ENCODE measurements at regions of chr6 and their contacts with region 1.

Region 1: GRCh38 chr6:52664186-52664990 is 6.5 kb upstream of the TMEM14A start:
- DNase-seq: peak; percentile 88 to 92
- H3K4me3 ChIP-seq: peak overlapping the region; percentile 63 to 71 (median 71)
- H3K27ac ChIP-seq: peak overlapping the region; percentile 29 to 66 (median 49)
- H3K4me1 ChIP-seq: peaks cover 0 to 12% of the 10 kb centered on the region in 2 donors
- H3K27me3 ChIP-seq: no peaks in the 10 kb centered on the region
- CTCF ChIP-seq: no peak
- POLR2A ChIP-seq: peak in 1 of 2 donors; percentile 95

Region 2: DNA sequence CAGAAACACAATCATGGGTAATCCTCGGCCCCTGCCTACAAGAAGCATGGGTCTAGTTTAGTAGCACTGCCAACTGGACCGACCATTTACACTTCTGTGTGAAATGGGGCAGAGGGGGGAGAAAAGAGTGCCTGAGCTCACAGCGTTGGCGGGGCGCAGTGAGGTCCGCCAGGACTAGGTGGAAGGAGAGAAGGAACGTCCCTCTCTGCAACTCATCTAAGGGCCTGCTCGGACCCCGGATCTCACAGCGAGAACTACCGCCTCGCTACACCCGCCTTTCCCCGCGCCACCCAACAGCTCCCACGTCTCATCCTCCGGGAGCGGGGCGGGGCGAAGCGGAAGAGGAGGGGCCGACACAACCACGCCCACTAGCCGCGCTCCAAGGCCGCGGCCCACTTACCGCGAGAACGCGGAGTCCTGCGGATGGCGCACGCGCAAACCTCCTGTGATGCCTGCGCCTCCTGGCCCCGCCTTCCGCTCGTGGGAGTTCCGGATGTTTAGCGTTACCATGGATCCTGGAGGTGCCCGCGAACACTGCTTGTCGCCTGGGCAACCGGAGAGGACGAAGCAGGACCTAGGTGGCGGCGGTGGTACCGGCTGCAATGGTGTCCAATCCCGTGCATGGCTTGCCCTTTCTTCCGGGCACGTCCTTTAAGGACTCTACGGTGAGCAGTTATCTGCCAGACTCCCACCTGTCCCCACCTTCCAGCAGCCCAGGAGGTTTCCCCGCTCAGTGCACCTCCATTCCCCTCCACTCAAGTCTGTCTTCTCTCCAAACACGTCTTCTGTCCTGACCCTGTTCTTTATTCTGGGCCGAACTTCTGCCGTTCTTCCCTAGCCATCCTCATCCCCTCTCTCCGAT is 244.3 kb before region 1 on chr6 and contains the start of gene EFHC1:
- intact Hi-C with region 1: loop called (anchors 2 kb)
- DNase-seq: peak; percentile 99
- H3K4me3 ChIP-seq: peak within 1 kb of the TSS; percentile 32 to 69 (median 33)
- H3K27ac ChIP-seq: peak within 1 kb of the TSS; percentile 57 to 74 (median 72)
- H3K4me1 ChIP-seq: peaks cover 7 to 26% of the 10 kb centered on the region in 2 donors
- H3K27me3 ChIP-seq: no peaks in the 10 kb centered on the region
- CTCF ChIP-seq: no peak
- POLR2A ChIP-seq: peak; percentile 22 to 91
- total RNA-seq, gene EFHC1: 39.4 to 96.5 (median 41.6) TPM

Region 3: GRCh38 chr6:52503848-52504781 is 160.3 kb before region 1 on chr6:
- intact Hi-C with region 1: loop called (anchors 10 kb)
- DNase-seq: peak; percentile 99
- H3K4me3 ChIP-seq: no peak overlapping the region
- H3K27ac ChIP-seq: peak overlapping the region; percentile 68 to 76 (median 71)
- H3K4me1 ChIP-seq: peaks cover 7 to 37% of the 10 kb centered on the region in 2 donors
- H3K27me3 ChIP-seq: no peaks in the 10 kb centered on the region
- CTCF ChIP-seq: no peak
- POLR2A ChIP-seq: no peak

Region 4: GRCh38 chr6:52598123-52598823 is 66.1 kb before region 1 on chr6:
- intact Hi-C with region 1: loop called (anchors 5 kb)
- DNase-seq: peak; percentile 58 to 64
- H3K4me3 ChIP-seq: no peak overlapping the region
- H3K27ac ChIP-seq: peak overlapping the region in 1 of 3 donors; percentile 51
- H3K4me1 ChIP-seq: peaks cover 23 to 46% of the 10 kb centered on the region in 2 donors
- H3K27me3 ChIP-seq: no peaks in the 10 kb centered on the region
- CTCF ChIP-seq: peak in 5 of 6 experiments; percentile 36 to 69 (median 59)
- POLR2A ChIP-seq: no peak

Measured in thyroid gland (tissue), 4 donors.